ENCODE measurements at regions of chr3 and their contacts with region 1.

Region 1: DNA sequence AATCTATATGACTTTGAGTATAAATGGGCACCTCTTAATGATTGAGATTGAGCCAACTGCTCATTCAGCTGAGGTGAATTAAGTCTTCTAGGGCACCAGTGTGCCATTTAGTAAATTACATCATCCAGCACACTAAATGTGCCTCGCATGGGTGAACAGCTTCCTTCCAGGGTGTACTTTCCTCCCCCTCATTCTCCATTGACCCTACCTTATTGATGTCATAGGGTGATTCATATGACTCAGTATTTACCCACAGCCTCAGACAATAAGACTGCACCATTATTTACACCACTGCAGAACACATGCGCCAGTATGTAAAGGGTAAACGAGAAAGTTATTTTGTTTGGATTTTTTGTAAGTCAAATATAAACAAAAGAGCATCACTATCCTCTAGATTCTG is 185.2 kb upstream of the ARL6 start:
- DNase-seq: no peak
- H3K4me3 Mint-ChIP-seq: no peak overlapping the region
- H3K27ac Mint-ChIP-seq: no peak overlapping the region
- H3K4me1 Mint-ChIP-seq: no peaks in the 10 kb centered on the region
- H3K27me3 Mint-ChIP-seq: no peaks in the 10 kb centered on the region
- CTCF ChIP-seq: no peak

Region 2: DNA sequence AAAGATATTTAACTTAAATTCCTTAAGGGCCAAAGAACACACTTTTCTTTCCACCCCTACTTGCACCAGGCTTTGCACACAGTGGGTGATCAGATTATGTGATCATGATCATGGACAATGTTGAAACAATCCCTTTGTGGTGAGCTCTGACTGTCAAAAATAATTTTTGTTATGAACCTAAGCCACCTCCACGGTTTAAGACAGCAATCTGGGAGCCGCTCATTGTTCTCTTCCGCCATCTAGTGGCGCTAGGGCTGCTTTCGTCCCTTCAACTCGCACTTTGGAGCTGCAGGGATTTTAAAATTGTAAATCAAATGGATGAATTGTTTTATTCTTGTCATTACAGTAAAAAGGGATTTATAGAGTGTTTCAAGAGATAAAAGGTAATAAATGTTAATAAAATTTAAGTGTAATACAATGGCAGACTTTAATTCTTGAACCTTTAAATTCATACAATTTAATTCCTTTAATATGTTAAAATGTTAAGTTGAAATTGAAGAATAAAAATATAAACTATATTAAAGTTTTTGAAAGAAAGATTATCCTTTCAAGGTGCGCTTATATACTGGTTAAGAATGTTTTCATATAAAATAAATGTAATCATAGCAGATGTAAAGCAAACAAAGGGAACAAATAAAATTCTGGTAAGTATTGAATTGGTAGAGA is 139.9 kb after region 1 on chr3:
- CTCF ChIA-PET with region 1: no interaction called
- intact Hi-C with region 1: loop called (anchors 10 kb)
- DNase-seq: peak; percentile 67
- H3K4me3 Mint-ChIP-seq: no peak overlapping the region
- H3K27ac Mint-ChIP-seq: no peak overlapping the region
- H3K4me1 Mint-ChIP-seq: no peaks in the 10 kb centered on the region
- H3K27me3 Mint-ChIP-seq: no peaks in the 10 kb centered on the region
- CTCF ChIP-seq: peak; percentile 74